ENCODE measurements at regions of chr1 and their contacts with region 1.

Region 1: GRCh38 chr1:156500797-156501499 is 373 bp upstream of the MEF2D start:
- DNase-seq: peak; percentile 96 to 97 (median 96)
- ATAC-seq: peak; percentile 56 to 90 (median 76)
- H3K4me3 ChIP-seq: peak overlapping the region; percentile 69 to 100 (median 95)
- H3K27ac ChIP-seq: peak overlapping the region; percentile 98 to 100 (median 100)
- H3K4me1 ChIP-seq: peaks cover 35 to 76% (median 70%) of the 10 kb centered on the region in 12 donors
- H3K27me3 ChIP-seq: no peaks in the 10 kb centered on the region
- CTCF ChIP-seq: peak; percentile 31 to 76 (median 58)
- POLR2A ChIP-seq: peak; percentile 12 to 82

Region 2: DNA sequence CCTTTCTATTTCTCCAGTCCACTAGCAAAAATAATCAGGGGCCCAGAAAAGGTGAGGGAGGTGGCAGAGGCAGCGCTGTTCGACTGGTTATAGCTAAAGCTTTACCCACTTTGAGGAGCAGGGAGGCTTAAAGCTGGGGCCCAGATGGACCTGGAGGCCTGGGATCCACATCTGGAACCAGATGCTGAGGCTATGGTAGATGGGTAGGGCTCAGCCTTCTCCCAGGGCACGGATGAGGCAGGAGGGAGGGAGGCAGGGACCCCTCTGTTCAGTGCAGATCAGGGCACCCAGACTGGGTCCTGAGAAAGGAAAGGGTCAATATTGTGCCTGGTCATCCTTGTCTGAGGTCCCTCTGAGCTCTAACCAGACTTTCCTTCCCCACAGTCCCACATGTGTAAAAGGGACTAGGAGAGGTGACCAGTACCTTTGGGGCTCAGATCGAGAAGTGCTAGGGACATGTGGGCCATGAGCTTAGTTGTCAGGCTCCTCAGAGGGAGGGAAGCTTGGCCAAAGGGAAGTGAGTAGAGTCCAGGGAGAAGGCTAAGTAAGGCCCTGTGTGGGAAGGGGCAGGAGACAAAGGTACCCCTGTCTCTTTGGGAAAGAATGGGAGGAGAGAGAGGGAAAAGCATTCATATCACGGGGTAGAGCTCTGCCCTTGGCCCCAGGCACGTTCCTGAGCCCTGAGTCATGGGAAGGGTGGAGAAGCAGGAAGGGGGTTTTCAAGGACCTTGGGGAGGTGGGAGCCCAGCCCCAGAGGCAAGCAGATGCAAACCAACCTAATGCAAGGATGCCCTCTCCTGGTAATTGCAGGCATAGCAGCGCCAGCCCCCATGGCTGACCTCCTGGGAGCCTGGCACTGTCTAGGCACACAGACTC is 371.0 kb before region 1 on chr1:
- intact Hi-C with region 1: loop called in 1 of 10 experiments (anchors 10 kb)
- DNase-seq: peak; percentile 83 to 92 (median 86)
- ATAC-seq: peak; percentile 63 to 69 (median 64)
- H3K4me3 ChIP-seq: peak overlapping the region in 10 of 12 donors; percentile 7 to 40 (median 30)
- H3K27ac ChIP-seq: peak overlapping the region; percentile 95 to 100 (median 98)
- H3K4me1 ChIP-seq: peaks cover 42 to 69% (median 62%) of the 10 kb centered on the region in 12 donors
- H3K27me3 ChIP-seq: no peaks in the 10 kb centered on the region
- CTCF ChIP-seq: peak; percentile 92 to 99 (median 99)
- POLR2A ChIP-seq: peak in 1 of 2 donors; percentile 40

Region 3: DNA sequence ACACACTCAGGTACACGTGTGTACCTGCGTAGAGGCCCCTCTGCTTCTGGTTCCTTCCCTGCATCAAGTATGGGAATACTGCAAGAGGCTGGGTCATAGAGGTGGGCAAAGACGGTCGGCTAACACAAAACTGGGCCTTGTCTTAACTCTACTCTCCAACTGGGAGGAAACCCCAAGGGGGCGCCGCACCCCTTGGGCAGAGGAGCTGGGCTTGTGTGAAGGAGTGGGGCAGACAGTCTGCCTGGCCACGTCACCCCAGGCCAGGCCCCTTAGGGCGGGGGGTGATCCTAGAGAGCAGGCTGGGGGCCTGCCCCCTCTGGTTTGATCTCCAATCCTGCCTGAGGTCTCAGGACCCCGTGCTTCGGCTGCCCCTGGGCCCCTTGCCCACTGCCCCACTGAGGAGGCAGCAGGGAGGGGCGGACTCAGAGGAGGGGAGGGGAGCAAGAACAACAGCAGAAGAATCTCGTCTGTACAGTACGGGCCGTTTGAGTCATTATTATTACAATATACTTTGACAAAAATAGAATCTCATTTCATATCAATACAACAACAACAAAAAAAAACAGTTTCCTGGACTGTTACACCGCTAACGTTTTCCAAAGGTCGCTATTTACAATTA is 35.1 kb before region 1 on chr1:
- intact Hi-C with region 1: loop called in 3 of 10 experiments (anchors 2 to 5 kb)
- DNase-seq: no peak
- ATAC-seq: peak in 3 of 4 donors; percentile 5 to 16 (median 12)
- H3K4me3 ChIP-seq: no peak overlapping the region
- H3K27ac ChIP-seq: peak overlapping the region; percentile 13 to 89 (median 60)
- H3K4me1 ChIP-seq: peaks cover 14 to 79% (median 51%) of the 10 kb centered on the region in 12 donors
- H3K27me3 ChIP-seq: no peaks in the 10 kb centered on the region
- CTCF ChIP-seq: peak in 2 of 12 donors; percentile 11 to 12
- POLR2A ChIP-seq: no peak

Region 4: DNA sequence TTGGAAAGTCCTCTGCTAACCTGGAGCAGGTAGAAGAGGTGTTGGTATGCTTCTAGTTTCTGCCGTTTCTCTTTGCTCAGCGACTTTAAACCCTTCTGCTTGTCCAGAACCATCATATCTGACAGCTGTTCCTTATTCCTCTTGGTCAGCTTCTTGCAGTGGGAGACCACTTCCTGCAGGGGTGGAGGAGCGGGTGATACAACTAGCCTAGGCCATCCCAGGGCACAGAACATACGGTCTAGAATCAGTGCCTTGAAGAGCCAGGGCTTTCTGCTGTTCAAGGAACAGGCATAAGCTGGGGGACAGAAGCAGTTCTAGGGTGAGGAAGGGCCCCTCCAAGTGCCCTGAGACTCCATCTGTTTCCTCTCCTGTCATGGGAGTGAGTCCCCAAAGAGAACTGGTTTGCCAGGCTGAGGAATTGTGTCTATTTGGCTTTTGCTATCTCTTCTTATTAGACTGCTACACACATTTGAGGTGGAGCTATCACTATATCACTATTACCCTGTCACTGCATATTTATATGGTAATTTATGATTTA is 38.9 kb after region 1 on chr1:
- intact Hi-C with region 1: no loop called
- DNase-seq: no peak
- ATAC-seq: peak in 2 of 4 donors; percentile 20 to 62
- H3K4me3 ChIP-seq: no peak overlapping the region
- H3K27ac ChIP-seq: peak overlapping the region in 1 of 12 donors; percentile 13
- H3K4me1 ChIP-seq: peaks cover 0 to 7% (median 0%) of the 10 kb centered on the region in 12 donors
- H3K27me3 ChIP-seq: no peaks in the 10 kb centered on the region
- CTCF ChIP-seq: no peak
- POLR2A ChIP-seq: no peak

Region 5: DNA sequence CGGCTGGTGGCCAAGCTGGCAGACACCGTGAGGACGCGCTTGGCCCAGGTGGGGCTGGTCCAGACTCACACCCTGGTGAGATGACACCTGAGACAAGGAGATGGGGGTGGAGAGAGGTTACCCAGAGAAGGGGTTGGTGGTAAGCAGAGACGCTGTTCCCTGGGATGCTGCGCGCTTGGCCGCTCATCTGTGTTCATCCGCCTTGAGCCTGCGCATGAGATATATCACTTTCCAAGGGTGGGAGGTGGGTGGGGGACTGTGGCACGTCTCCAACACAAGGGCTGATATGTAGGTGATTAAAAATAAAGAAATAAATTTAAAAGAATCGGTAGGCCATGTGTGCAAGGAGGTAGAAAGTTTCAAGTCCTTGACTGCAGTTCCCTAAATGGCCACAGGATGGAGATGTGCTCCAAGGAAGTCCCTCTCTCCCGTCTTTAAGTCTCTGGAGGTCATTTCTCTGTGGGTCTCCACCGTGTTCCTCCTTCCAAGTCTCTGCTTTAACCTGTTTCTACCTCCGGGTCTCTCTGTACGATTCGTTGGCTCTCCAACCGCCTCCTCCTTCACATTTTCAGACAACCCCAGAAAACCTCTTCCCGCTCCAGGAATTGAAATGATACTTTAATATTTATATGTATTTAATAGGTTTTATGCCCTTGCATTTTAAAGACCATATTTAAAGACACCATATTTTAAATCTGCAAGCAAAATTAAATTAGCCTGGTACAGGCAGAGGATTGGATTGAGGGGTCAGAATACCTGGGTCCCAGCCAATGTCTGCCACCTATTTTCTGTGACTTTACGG is 83.1 kb after region 1 on chr1:
- intact Hi-C with region 1: loop called in 1 of 10 experiments (anchors 5 kb)
- DNase-seq: peak in 4 of 5 donors; percentile 63 to 70 (median 66)
- ATAC-seq: peak in 3 of 4 donors; percentile 27 to 55 (median 54)
- H3K4me3 ChIP-seq: no peak overlapping the region
- H3K27ac ChIP-seq: no peak overlapping the region
- H3K4me1 ChIP-seq: peaks cover 0 to 7% (median 0%) of the 10 kb centered on the region in 12 donors
- H3K27me3 ChIP-seq: no peaks in the 10 kb centered on the region
- CTCF ChIP-seq: peak; percentile 86 to 98 (median 93)
- POLR2A ChIP-seq: no peak

Region 6: DNA sequence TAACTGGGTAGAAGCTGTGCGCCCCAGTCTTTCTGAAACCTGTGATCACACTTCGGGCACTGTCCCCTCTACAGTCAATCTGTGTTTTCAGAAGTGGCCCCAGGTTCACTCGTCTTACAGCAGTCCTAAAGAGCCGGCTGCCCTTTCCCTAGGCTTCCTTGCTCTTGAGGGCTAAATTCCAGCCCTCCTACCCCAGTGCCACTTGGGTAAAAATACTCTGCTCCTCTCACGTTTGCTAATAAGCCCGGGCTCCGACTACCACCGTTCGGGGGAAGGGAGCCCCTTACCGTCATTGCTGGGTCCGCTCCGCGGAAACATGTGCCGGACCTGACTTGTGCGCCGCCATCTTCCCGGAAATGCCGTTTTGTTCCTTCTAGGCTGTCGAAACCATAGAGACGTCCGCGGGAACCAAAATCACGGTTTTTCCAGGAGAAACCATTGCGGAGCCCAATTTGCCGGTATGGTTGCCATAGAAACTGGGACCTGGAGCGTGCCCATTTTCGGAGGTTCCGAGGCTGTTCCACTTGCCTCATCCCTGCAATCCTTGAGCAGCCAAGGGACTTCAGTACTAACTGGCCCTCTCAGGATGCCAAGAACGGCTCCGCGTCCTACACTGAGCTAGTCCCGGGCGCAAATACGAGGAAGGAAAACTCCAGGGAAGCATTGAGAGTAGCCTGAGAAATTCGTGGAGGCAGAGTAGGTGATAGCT is 100.3 kb after region 1 on chr1 and contains the start of gene GPATCH4:
- intact Hi-C with region 1: loop called in 2 of 10 experiments (anchors 5 to 10 kb)
- DNase-seq: peak; percentile 78 to 80 (median 79)
- ATAC-seq: peak; percentile 84 to 89 (median 86)
- H3K4me3 ChIP-seq: peak within 1 kb of the TSS; percentile 56 to 86 (median 70)
- H3K27ac ChIP-seq: peak within 1 kb of the TSS; percentile 24 to 85 (median 72)
- H3K4me1 ChIP-seq: peaks cover 3 to 27% (median 14%) of the 10 kb centered on the region in 12 donors
- H3K27me3 ChIP-seq: no peaks in the 10 kb centered on the region
- CTCF ChIP-seq: no peak
- POLR2A ChIP-seq: peak in 1 of 2 donors; percentile 29
- total RNA-seq, gene GPATCH4: 8.8 to 30.1 (median 12.6) TPM

Region 7: DNA sequence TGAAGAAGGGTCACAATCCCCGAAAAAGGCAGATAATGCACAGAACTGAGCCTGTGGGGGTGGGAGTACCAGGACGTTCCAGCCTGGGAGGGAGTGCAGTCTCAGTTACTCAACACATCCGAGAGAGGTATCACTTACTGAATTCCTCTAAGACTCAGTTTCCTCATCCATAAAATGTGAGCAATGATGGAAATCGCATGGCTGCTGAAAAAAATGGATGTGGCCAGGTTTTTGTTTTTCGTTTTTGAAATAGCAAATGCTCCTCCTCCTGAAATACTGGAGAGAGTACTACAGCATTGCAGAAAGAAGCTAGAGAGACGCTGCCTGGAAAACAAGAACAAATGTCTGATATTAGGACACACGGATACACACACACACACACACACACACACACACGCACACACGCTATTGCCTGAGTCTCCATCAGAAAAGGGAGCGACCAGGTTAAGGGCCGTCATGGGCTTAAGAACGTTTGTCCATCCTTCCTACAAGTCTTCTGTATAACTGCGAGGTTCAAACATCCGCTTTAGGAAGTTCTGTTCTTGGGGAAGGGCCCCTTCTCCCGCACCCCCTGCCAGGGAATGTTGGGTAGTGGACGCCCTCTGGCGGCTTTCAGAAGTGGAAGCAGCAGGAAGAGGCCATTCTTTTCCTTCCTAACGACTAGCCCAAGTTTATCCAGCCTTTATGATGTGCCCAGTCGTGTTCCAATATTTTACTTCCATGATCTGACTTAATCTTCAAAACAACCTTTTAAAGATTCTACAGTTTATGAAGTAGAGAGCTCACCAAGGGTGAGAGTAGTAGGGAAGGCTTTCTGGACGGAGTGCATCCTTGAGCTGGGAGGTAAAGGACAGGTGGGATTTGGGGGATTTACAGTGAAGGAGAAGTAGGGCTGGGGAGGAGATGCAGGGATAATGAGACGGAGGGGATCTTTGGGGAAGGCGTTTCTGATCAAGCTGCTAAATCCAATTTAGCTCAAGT is 177.0 kb after region 1 on chr1:
- intact Hi-C with region 1: loop called in 1 of 10 experiments (anchors 5 kb)
- DNase-seq: peak; percentile 80 to 89 (median 85)
- ATAC-seq: peak; percentile 35 to 79 (median 70)
- H3K4me3 ChIP-seq: peak overlapping the region in 11 of 12 donors; percentile 51 to 92 (median 69)
- H3K27ac ChIP-seq: peak overlapping the region in 11 of 12 donors; percentile 64 to 98 (median 91)
- H3K4me1 ChIP-seq: peaks cover 4 to 51% (median 33%) of the 10 kb centered on the region in 12 donors
- H3K27me3 ChIP-seq: peaks cover 0 to 47% (median 0%) of the 10 kb centered on the region in 9 donors
- CTCF ChIP-seq: peak; percentile 75 to 98 (median 90)
- POLR2A ChIP-seq: no peak